ENCODE measurements at regions of chr5 and their contacts with region 1.

Region 1: DNA sequence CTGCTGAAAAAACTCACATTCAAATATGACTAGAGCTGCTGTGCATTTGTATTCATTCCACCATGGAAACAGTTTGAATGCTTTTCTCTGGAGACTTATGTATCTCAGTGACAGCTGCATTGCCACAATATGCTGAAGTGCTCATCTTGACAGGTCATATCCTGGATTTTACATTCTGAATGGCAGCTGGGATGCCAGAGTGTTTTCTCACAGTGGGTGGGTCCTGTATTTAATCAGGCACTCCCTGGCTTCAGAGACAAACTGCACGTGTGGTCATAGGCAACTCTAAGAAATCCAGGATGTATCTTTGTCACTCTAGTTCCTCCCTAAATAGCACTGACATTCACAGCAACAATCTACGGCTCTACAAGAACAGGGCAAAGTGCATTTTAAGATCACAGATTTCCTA is 75.6 kb downstream of the ST8SIA4 start:
- DNase-seq: peak; percentile 50
- H3K4me3 ChIP-seq: peak overlapping the region; percentile 33
- H3K27ac ChIP-seq: peak overlapping the region; percentile 13
- H3K4me1 ChIP-seq: peaks cover 24% of the 10 kb centered on the region
- CTCF ChIP-seq: no peak

Region 2: GRCh38 chr5:100424017-100424416 is 403.5 kb before region 1 on chr5:
- CTCF ChIA-PET with region 1: no interaction called
- POLR2A ChIA-PET with region 1: no interaction called
- intact Hi-C with region 1: no loop called
- DNase-seq: no peak
- H3K4me3 ChIP-seq: no peak overlapping the region
- H3K27ac ChIP-seq: no peak overlapping the region
- H3K4me1 ChIP-seq: no peaks in the 10 kb centered on the region
- CTCF ChIP-seq: no peak

Region 3: DNA sequence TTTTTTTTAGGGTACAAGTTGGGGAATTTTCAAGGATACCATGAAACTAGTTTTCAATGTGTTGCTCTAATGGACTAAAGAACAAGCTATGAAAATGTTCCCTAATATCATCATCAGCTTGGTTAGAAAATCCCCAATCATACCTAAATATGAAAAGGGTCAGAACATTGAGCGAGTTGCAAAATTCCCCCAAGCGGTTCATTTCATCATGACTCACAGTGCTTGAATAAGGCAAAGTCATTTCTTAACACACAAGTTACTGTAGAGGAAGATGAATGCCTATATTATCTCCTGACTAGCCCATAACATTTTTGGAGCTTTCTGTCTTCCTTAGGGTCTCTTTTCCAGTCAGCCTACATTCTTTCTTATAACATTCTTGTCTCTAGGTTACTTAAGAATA is 12.9 kb after region 1 on chr5:
- CTCF ChIA-PET with region 1: no interaction called
- POLR2A ChIA-PET with region 1: interaction called, 15 read pairs
- intact Hi-C with region 1: no loop called
- DNase-seq: peak; percentile 40
- H3K4me3 ChIP-seq: peak overlapping the region; percentile 53
- H3K27ac ChIP-seq: peak overlapping the region; percentile 45
- H3K4me1 ChIP-seq: peaks cover 34% of the 10 kb centered on the region
- CTCF ChIP-seq: no peak

Measured in OCI-LY7 (cell line).